Kidney (tissue), 22 donors: ENCODE measurements at regions of chr11 and their contacts with region 1.

Region 1: GRCh38 chr11:15011776-15012175 is 39.6 kb upstream of the CALCA start:
- DNase-seq: peak in 1 of 5 donors; percentile 8
- H3K4me3 ChIP-seq: no peak overlapping the region
- H3K27ac ChIP-seq: no peak overlapping the region
- H3K4me1 ChIP-seq: no peaks in the 10 kb centered on the region
- H3K27me3 ChIP-seq: no peaks in the 10 kb centered on the region
- CTCF ChIP-seq: no peak

Region 2: DNA sequence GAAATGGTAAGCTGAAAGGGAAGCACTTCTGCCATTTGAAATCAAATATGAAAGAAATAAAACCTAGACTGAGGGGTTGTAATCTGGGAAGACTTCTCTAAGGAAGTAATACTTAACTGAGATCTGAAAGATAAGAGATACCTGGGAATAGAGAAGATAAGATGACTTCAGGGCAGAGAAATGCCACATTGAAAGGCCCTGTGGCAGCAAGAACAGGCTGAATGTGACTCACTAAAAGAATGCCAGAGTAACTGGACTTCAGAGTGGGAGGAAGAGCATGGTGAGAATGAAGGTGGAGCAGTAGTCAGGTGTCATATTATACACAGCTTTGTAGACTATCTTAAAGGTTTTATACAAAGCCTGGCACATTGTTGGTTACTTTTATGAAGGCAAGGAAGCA is 57.2 kb before region 1 on chr11:
- intact Hi-C with region 1: loop called (anchors 5 kb)
- DNase-seq: no peak
- H3K4me3 ChIP-seq: no peak overlapping the region
- H3K27ac ChIP-seq: no peak overlapping the region
- H3K4me1 ChIP-seq: no peaks in the 10 kb centered on the region
- H3K27me3 ChIP-seq: no peaks in the 10 kb centered on the region
- CTCF ChIP-seq: no peak